GM10248 (cell line): ENCODE measurements at regions of chr9 and their contacts with region 1.

Region 1: DNA sequence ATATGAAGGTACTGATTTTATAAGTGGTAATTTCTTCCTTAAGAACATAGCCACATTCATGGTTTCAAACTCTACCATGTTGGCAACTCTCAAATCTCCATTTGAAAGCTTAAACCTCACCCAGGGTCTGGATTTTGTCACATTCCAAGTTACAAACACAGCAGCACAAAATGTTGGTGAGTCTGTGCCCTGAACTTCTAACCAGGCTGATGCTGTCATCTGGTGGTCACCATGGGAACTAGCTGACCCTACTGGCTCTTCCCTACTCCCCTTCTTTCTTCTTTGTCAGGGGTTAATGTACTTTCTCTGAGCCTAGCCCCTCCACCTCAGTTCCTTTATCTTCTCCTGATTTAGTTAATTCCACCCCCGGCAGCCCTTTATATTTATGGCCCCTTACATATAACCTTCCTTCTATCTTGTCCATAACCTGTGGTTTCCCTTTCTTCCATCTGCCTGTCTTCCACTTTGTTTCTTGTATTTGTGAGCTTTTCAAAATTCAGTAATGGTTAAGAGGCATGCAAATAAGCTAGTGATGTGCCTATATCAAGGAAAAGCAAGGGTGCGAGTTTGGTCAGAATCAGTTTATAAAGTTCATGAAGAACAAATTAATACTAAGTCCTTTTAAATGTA is 35.9 kb downstream of the TGFBR1 start:
- DNase-seq: peak; percentile 50
- CTCF ChIP-seq: peak; percentile 83

Region 2: GRCh38 chr9:98838155-98838867 is 302.5 kb before region 1 on chr9:
- CTCF ChIA-PET with region 1: interaction called, 12 read pairs
- POLR2A ChIA-PET with region 1: no interaction called
- DNase-seq: no peak
- CTCF ChIP-seq: no peak

Region 3: GRCh38 chr9:98983295-98984268 is 157.2 kb before region 1 on chr9:
- CTCF ChIA-PET with region 1: interaction called, 11 read pairs
- POLR2A ChIA-PET with region 1: no interaction called
- DNase-seq: no peak
- CTCF ChIP-seq: no peak

Region 4: GRCh38 chr9:99012942-99013512 is 127.8 kb before region 1 on chr9:
- CTCF ChIA-PET with region 1: interaction called, 11 read pairs
- POLR2A ChIA-PET with region 1: no interaction called
- DNase-seq: no peak
- CTCF ChIP-seq: no peak

Region 5: DNA sequence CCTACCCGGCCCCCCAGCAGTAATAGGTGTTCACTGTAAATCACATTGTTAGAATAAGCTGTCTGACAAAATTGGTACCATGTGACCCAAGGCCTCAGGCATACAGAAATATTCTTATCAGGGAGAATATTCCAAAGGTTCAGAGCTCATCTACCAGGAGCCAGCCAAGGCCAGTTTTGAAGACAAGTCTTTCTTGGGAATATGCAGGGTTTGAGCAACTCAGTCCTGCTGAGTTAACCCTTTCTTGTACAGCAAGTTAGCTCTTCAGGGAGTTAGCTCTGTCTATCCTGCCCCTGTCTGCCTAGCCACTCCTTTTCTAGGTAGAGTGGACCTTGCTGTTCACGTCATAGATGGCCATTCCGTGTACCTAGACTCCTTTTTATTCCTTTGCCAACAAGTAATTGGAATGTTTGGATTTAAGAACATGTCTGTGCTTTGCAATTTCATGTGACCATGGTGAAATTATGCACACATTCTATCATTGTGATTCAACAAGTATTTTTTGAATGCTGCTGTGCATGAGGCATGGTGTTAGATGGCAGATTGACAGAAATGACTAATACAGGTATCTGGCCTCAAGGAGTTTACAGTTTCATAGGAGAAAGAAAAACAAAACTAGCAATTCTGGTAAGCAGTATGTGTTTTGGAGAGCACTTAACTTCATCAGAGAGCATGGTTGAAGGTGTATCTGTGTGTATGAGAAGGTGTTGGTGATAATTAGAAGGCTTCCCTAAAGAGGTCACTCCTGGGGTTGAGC is 13.2 kb before region 1 on chr9:
- CTCF ChIA-PET with region 1: interaction called, 22 read pairs
- POLR2A ChIA-PET with region 1: no interaction called
- DNase-seq: no peak
- CTCF ChIP-seq: no peak

Region 6: DNA sequence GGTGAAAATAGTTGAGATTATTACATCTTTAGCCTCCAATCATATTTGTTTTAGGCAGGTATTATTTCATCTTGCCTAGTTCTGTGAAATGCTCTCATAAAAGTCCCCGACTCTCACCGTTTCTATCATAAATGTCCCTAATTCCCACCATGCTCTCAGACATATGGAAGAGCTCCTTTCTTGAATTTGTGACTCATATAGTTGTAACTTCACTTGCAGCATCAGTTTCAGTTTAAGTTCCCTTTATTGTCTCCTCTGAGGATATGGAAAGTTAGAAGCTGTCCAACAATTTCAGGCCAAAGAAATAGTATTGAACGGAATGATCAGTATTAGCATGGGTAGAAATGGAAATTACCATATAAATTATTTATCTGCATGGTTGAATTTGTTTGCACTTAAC is 493.4 kb after region 1 on chr9:
- CTCF ChIA-PET with region 1: no interaction called
- POLR2A ChIA-PET with region 1: no interaction called
- DNase-seq: no peak
- CTCF ChIP-seq: no peak

Region 7: DNA sequence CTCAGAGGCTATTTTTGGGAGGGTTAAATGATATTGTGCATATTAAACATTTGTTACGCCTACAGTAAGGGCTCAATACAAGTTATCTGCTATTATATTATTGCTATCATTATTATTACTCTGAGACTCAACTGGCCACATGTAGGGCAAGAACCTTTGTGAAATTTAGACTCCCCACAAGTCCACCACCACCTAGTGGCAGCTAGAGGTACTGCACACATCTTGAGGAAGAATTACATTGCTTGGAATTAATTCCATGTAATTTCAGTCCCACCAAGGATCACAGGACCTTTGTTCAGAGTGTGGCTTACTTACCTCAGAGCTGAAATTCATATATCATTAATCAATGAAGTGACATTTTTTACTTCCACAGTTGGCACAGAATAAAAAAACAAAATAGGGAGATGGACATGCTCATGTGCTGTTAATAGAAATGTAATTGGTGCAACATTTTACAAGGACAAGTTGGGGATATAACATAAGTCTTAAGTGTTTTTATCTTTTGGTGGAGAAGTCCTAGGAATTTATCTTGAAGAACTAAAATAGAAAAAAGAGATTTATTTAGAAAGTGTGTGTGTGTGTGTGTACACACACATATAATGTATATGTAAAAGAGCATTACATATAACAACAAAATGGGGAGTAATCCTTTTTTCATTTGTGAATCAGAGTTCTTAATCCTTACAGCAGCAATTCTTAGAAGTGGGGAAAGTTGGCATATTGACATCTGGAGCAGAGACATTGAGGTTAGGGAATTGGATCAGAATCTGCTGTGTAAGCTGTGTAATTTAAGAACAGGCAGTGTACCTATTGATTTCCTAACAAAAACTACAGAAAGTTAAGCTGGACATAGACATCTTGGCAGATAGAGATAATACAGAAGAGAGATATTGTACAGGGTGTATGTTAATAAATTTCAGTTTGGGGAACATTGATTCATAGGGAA is 1297.3 kb after region 1 on chr9:
- CTCF ChIA-PET with region 1: no interaction called
- POLR2A ChIA-PET with region 1: no interaction called
- DNase-seq: peak; percentile 55
- CTCF ChIP-seq: peak; percentile 88